Psoas muscle (tissue), 8 donors: ENCODE measurements at regions of chr1 and their contacts with region 1.

Region 1: GRCh38 chr1:154961497-154962262 is at the start of gene PYGO2:
- DNase-seq: peak; percentile 84 to 90
- ATAC-seq: peak; percentile 82 to 86 (median 83)
- H3K4me3 ChIP-seq: peak within 1 kb of the TSS; percentile 76
- H3K27ac ChIP-seq: peak within 1 kb of the TSS; percentile 93
- H3K4me1 ChIP-seq: peaks cover 30% of the 10 kb centered on the region
- H3K27me3 ChIP-seq: no peaks in the 10 kb centered on the region
- CTCF ChIP-seq: peak; percentile 72
- total RNA-seq, gene PYGO2: 14.5 to 23.0 (median 17.4) TPM

Region 2: GRCh38 chr1:154442006-154442740 is 519.5 kb before region 1 on chr1:
- intact Hi-C with region 1: no loop called
- DNase-seq: no peak
- ATAC-seq: peak; percentile 30 to 39 (median 36)
- H3K4me3 ChIP-seq: no peak overlapping the region
- H3K27ac ChIP-seq: no peak overlapping the region
- H3K4me1 ChIP-seq: peaks cover 28% of the 10 kb centered on the region
- H3K27me3 ChIP-seq: no peaks in the 10 kb centered on the region
- CTCF ChIP-seq: peak; percentile 30

Region 3: GRCh38 chr1:155017041-155017945 is 55.6 kb after region 1 on chr1:
- intact Hi-C with region 1: loop called in 1 of 2 experiments (anchors 2 kb)
- DNase-seq: peak; percentile 91 to 97
- ATAC-seq: peak; percentile 87 to 92 (median 88)
- H3K4me3 ChIP-seq: peak overlapping the region; percentile 67
- H3K27ac ChIP-seq: peak overlapping the region; percentile 85
- H3K4me1 ChIP-seq: peaks cover 22% of the 10 kb centered on the region
- H3K27me3 ChIP-seq: no peaks in the 10 kb centered on the region
- CTCF ChIP-seq: peak; percentile 99